ENCODE measurements at regions of chr15 and their contacts with region 1.

Region 1: DNA sequence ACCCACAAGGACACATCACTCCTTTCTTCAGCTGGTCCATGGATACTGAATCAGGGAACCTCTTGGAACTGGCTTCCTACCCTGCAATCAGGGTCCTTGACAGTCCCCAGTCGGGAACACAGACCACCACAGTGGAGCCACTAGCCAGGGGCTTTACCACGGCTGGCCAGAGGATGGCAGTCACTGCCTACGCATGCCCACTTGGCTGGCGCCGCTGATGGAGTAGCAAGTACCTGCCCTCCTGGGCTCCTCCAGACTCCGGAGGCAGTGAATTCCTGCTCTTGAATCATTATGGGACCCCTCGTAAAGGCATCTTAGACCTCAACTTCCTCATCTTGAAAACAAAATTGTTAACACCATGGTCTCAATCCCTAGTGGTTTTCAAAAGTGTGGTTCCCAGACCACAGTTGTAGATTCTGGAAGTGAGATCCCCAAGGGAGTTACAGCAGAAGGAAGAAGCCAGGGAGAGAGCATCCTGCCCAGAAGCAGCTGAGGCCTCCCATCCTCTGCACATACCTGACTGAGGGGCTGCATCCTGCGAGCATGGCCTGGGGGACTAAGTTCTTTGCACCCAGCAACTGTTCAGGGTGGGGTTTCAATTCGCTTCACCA is 9.1 kb upstream of the SKIC8 start:
- DNase-seq: peak; percentile 56 to 79
- ATAC-seq: peak; percentile 81 to 96 (median 86)
- H3K4me3 ChIP-seq: no peak overlapping the region
- H3K27ac ChIP-seq: no peak overlapping the region
- H3K4me1 ChIP-seq: no peaks in the 10 kb centered on the region
- H3K27me3 ChIP-seq: peaks cover 0 to 6% (median 2%) of the 10 kb centered on the region in 3 donors
- CTCF ChIP-seq: peak; percentile 84

Region 2: DNA sequence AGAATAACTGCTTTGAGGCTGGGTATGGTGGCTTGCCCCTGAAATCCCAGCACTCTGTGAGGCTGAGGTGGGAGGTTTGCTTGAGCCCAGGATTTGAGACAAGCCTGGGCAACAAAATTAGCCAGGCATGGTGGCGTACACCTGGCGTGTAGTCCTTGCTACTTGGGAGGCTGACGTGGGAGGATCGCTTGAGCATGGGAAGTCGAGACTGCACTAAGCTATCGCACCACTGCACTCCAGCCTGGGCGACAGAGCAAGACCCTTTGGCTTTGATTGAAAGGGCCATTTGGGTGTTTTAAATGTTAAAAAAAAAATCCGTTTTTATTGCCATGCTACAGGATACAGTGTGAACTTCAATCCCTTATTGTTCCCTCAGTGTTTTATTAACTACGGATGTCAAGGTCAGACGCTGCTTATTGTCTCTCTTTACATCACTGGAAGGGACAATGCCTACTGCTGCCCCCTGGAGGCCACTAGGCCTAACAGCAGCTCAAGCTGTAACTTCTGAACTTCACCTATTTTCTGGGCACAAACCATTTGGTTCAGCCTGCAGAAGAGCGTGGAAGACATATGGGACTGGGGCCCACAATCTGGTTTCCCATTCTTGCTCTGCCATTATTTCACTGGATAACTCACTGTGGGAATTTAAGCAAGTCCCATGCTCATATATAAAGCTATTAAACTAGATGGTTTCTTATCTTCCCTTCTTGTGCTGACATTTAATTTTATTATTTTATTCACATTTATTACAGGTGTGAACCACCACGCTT is 114.2 kb after region 1 on chr15:
- intact Hi-C with region 1: loop called (anchors 1 to 5 kb)
- DNase-seq: peak; percentile 51 to 77
- ATAC-seq: peak; percentile 74 to 88 (median 82)
- H3K4me3 ChIP-seq: no peak overlapping the region
- H3K27ac ChIP-seq: no peak overlapping the region
- H3K4me1 ChIP-seq: no peaks in the 10 kb centered on the region
- H3K27me3 ChIP-seq: no peaks in the 10 kb centered on the region
- CTCF ChIP-seq: peak; percentile 89

Region 3: GRCh38 chr15:78449220-78449999 is 140.9 kb after region 1 on chr15:
- intact Hi-C with region 1: no loop called
- DNase-seq: no peak
- ATAC-seq: no peak
- H3K4me3 ChIP-seq: no peak overlapping the region
- H3K27ac ChIP-seq: no peak overlapping the region
- H3K4me1 ChIP-seq: peaks cover 45% of the 10 kb centered on the region
- H3K27me3 ChIP-seq: no peaks in the 10 kb centered on the region
- CTCF ChIP-seq: no peak

Measured in psoas muscle (tissue), 8 donors.